PC-3 (cell line): ENCODE measurements at regions of chr17 and their contacts with region 1.

Region 1: DNA sequence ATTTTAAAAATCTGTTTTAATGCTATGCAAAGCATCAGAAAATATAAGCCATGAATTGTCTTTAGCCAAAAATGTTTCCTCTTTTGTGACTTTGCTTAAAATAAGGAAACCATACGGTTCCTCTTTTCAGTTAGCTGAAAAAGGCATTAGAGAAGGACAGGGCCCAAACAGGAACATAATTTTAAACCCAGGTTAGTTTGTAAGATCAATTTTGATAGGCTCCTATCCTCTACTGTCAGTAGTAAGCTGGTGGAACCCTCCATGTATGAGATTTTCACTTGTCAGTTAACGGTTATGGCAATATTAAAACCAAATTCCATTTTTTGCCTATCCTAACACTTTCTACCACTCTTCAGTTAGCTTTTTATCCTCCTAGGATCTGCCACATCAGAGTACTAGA is 4.3 kb downstream of the EVI2B start:
- DNase-seq: no peak
- ATAC-seq: no peak
- H3K4me3 ChIP-seq: no peak overlapping the region
- H3K27ac ChIP-seq: no peak overlapping the region
- H3K4me1 ChIP-seq: peaks cover 11% of the 10 kb centered on the region
- H3K27me3 ChIP-seq: no peaks in the 10 kb centered on the region
- CTCF ChIP-seq: no peak

Region 2: DNA sequence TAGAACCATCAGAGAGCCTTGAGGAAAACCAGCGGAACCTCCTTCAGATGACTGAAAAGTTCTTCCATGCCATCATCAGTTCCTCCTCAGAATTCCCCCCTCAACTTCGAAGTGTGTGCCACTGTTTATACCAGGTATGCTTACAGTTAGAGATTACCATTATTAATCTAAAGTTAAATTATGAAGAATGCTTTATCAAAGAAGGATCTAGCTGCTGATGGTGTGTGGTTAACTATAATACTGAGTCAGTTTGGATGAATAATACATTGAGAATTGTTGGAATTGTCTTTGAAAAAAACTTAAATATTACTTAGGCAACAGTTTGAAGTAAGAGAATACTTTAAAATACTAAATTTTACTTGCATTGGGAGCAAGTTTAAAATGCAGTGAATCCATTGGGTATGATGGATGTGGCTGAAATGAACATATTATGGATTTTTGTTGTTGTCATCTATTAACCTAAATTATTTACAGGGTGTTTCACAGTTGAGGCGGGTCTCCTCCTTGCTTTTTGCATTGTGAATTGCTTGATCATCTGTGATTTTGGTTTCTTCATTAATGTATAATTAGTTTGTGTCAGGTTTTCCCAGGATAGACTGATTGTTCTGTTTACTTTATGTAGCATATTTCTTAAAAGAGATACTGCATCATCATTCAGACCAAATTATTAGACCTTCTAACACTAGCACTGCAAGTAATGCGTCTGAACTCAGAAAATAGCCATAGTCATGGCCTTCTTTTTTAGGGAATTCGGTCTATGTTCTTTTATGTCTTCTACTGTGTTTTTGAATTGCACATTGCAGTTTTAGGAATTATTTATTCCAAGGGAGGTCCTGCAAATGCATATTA is 60.3 kb before region 1 on chr17:
- CTCF ChIA-PET with region 1: no interaction called
- POLR2A ChIA-PET with region 1: no interaction called
- intact Hi-C with region 1: loop called (anchors 10 kb)
- DNase-seq: peak; percentile 70
- ATAC-seq: peak; percentile 96
- H3K4me3 ChIP-seq: no peak overlapping the region
- H3K27ac ChIP-seq: peak overlapping the region; percentile 48
- H3K4me1 ChIP-seq: peaks cover 30% of the 10 kb centered on the region
- H3K27me3 ChIP-seq: no peaks in the 10 kb centered on the region
- CTCF ChIP-seq: no peak